ENCODE measurements at regions of chr17 and their contacts with region 1.

Region 1: GRCh38 chr17:30894236-30894635 is 11.8 kb downstream of the TEFM start:
- DNase-seq: no peak
- H3K4me3 ChIP-seq: no peak overlapping the region
- H3K27ac ChIP-seq: no peak overlapping the region
- H3K4me1 ChIP-seq: no peaks in the 10 kb centered on the region
- H3K27me3 ChIP-seq: no peaks in the 10 kb centered on the region
- CTCF ChIP-seq: no peak

Region 2: GRCh38 chr17:30961209-30962188 is 67.3 kb after region 1 on chr17:
- CTCF ChIA-PET with region 1: no interaction called
- POLR2A ChIA-PET with region 1: interaction called, 17 read pairs
- intact Hi-C with region 1: no loop called
- DNase-seq: no peak
- H3K4me3 ChIP-seq: no peak overlapping the region
- H3K27ac ChIP-seq: no peak overlapping the region
- H3K4me1 ChIP-seq: no peaks in the 10 kb centered on the region
- H3K27me3 ChIP-seq: no peaks in the 10 kb centered on the region
- CTCF ChIP-seq: no peak